Caco-2 (cell line): ENCODE measurements at regions of chr18 and their contacts with region 1.

Region 1: GRCh38 chr18:9613550-9614400 is 584 bp downstream of the PPP4R1 start:
- DNase-seq: peak; percentile 70 to 84
- H3K4me3 ChIP-seq: peak overlapping the region; percentile 79
- H3K4me3 Mint-ChIP-seq: peak overlapping the region; percentile 99
- H3K27ac Mint-ChIP-seq: peak overlapping the region; percentile 94
- H3K4me1 ChIP-seq: peaks cover 35% of the 10 kb centered on the region
- H3K4me1 Mint-ChIP-seq: peaks cover 30% of the 10 kb centered on the region
- H3K27me3 ChIP-seq: no peaks in the 10 kb centered on the region
- H3K27me3 Mint-ChIP-seq: no peaks in the 10 kb centered on the region
- CTCF ChIP-seq: no peak

Region 2: GRCh38 chr18:9661564-9661963 is 47.8 kb after region 1 on chr18:
- CTCF ChIA-PET with region 1: interaction called, 11 read pairs
- POLR2A ChIA-PET with region 1: no interaction called
- intact Hi-C with region 1: loop called (anchors 1 kb)
- DNase-seq: peak in 1 of 2 experiments; percentile 20
- H3K4me3 ChIP-seq: no peak overlapping the region
- H3K4me3 Mint-ChIP-seq: no peak overlapping the region
- H3K27ac Mint-ChIP-seq: no peak overlapping the region
- H3K4me1 ChIP-seq: peaks cover 10% of the 10 kb centered on the region
- H3K4me1 Mint-ChIP-seq: peaks cover 20% of the 10 kb centered on the region
- H3K27me3 ChIP-seq: no peaks in the 10 kb centered on the region
- H3K27me3 Mint-ChIP-seq: no peaks in the 10 kb centered on the region
- CTCF ChIP-seq: peak; percentile 22 to 31